ENCODE measurements at regions of chr1 and their contacts with region 1.

Region 1: GRCh38 chr1:178310685-178311105 is 186.1 kb downstream of the CLEC20A start:
- DNase-seq: peak; percentile 85
- ATAC-seq: peak; percentile 77
- H3K4me3 ChIP-seq: no peak overlapping the region
- H3K27ac ChIP-seq: no peak overlapping the region
- H3K4me1 ChIP-seq: peaks cover 12% of the 10 kb centered on the region
- H3K27me3 ChIP-seq: no peaks in the 10 kb centered on the region
- CTCF ChIP-seq: peak; percentile 73

Region 2: DNA sequence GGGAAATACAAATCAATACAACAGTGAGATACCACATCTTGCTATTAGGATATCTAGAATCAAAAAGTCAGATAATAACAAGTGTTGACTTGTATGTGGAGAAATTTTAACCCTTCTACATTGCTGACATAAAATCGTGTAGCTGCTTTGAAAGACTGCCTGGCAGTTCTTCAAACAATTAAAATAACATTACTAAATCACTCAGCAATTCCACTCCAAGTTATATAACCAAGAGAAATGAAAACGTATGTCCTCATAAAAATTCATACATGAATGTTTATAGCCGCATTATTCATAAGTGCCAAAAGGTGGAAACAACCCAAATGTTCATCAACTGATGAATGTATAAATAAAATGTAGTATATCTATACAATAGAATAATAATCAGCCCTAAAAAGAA is 52.2 kb before region 1 on chr1:
- CTCF ChIA-PET with region 1: no interaction called
- POLR2A ChIA-PET with region 1: no interaction called
- intact Hi-C with region 1: no loop called
- DNase-seq: peak; percentile 7
- ATAC-seq: no peak
- H3K4me3 ChIP-seq: no peak overlapping the region
- H3K27ac ChIP-seq: no peak overlapping the region
- H3K4me1 ChIP-seq: no peaks in the 10 kb centered on the region; the same call in 1 of the 2 replicates
- H3K27me3 ChIP-seq: no peaks in the 10 kb centered on the region
- CTCF ChIP-seq: no peak

Region 3: GRCh38 chr1:178282949-178283367 is 27.7 kb before region 1 on chr1:
- CTCF ChIA-PET with region 1: no interaction called
- POLR2A ChIA-PET with region 1: no interaction called
- intact Hi-C with region 1: no loop called
- DNase-seq: peak; percentile 62
- ATAC-seq: peak; percentile 85
- H3K4me3 ChIP-seq: no peak overlapping the region
- H3K27ac ChIP-seq: peak overlapping the region; percentile 51
- H3K4me1 ChIP-seq: peaks cover 23% of the 10 kb centered on the region
- H3K27me3 ChIP-seq: no peaks in the 10 kb centered on the region
- CTCF ChIP-seq: peak; percentile 61

Region 4: DNA sequence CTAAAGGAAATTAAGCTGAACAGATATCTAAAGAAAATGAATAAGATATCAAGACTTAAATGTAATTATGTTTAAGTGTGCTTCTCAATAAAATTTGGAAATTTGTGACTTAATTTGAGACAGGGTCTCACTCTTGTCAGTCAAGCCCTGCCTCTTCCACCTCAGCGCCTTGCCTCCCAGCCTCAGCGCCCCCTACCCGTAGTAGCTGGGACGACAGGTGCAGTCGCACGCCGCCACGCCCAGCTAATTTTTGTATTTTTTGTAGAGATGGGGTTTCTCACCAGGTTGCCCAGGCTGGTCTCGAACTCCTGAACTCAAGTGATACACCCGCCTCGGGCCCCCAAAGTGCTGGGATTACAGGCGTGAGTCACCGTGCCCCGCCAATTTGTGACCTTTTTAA is 69.1 kb after region 1 on chr1:
- CTCF ChIA-PET with region 1: no interaction called
- POLR2A ChIA-PET with region 1: interaction called, 22 read pairs
- intact Hi-C with region 1: no loop called
- DNase-seq: no peak
- ATAC-seq: no peak
- H3K4me3 ChIP-seq: no peak overlapping the region
- H3K27ac ChIP-seq: no peak overlapping the region
- H3K4me1 ChIP-seq: no peaks in the 10 kb centered on the region
- H3K27me3 ChIP-seq: no peaks in the 10 kb centered on the region
- CTCF ChIP-seq: peak; percentile 30; the same call in 1 of the 2 replicates

Region 5: DNA sequence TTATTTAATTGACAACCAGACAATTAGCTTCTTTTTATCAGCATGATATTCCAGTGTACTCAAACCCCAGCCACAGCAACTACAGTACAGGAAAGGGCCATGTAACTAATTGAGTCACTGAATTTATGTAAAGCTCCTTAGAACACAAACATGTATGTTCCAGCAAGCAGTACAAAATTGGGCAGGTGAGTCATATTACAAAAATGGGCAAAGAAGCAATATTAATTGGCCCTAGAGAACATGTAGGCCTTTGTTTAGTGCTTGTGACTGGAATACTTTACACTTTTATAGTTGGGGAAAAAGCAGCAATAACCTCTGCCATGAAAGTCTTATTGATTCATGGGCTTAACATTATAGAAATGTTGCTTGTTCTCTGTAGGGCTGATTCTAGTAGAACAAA is 154.3 kb after region 1 on chr1:
- CTCF ChIA-PET with region 1: no interaction called
- POLR2A ChIA-PET with region 1: no interaction called
- intact Hi-C with region 1: loop called (anchors 5 kb)
- DNase-seq: peak; percentile 36
- ATAC-seq: peak; percentile 79
- H3K4me3 ChIP-seq: no peak overlapping the region
- H3K27ac ChIP-seq: no peak overlapping the region
- H3K4me1 ChIP-seq: peaks cover 4% of the 10 kb centered on the region
- H3K27me3 ChIP-seq: no peaks in the 10 kb centered on the region
- CTCF ChIP-seq: no peak

Region 6: DNA sequence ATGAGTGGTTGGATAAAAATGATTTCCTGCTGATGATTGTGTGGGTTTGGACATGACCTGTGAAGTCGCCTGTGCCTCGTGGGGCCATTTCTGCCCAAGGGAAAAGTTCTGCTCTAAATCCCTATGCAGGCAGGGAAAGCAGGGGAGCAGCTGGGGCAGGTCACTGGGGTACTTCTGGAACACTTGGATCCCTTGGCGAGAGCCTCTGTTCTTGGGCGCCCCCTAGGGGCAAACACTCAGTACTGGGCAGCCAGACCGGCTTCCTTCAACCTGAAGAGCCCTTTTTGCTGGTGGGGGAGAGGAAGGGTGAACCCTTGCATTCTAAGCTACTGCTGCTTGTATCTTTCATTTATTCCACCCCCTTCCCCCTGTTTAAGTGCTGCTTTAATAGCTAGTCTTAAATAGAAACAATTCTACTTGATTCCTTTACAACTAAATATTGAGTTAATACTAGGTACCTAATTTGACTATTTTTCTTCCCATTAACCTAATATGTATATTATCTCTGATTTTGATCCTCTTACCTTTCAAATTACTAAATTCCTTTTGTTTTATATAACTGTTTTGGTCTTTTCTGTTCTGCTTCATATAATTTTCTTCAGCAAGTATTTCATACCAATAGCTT is 191.1 kb after region 1 on chr1:
- CTCF ChIA-PET with region 1: interaction called, 5 read pairs
- POLR2A ChIA-PET with region 1: no interaction called
- intact Hi-C with region 1: loop called (anchors 5 kb)
- DNase-seq: peak; percentile 71
- ATAC-seq: peak; percentile 88
- H3K4me3 ChIP-seq: no peak overlapping the region
- H3K27ac ChIP-seq: no peak overlapping the region
- H3K4me1 ChIP-seq: no peaks in the 10 kb centered on the region
- H3K27me3 ChIP-seq: no peaks in the 10 kb centered on the region
- CTCF ChIP-seq: peak; percentile 80

Region 7: DNA sequence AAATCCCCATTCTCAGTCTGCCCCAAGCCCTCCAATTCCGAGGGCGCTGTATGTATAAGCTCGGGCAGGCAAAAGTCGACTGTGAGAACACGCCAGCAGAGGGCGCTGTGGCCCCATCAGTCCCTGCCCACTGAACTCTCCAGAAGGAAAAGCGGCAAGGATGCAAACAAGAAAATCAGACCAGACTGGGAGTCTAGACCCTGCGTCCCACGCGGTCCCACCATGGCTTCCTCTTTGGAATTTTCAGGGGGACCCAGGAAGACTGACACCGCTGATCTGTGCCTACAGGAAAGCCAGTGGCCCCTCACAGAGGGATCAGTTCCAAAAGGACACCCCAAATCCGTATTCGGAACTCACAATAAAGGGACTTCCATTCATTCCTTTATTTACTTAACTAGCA is 221.7 kb after region 1 on chr1:
- CTCF ChIA-PET with region 1: interaction called, 7 read pairs
- POLR2A ChIA-PET with region 1: no interaction called
- intact Hi-C with region 1: loop called (anchors 5 kb)
- DNase-seq: peak; percentile 85
- ATAC-seq: peak; percentile 42
- H3K4me3 ChIP-seq: peak overlapping the region; percentile 46; the same call in 1 of the 2 replicates
- H3K27ac ChIP-seq: no peak overlapping the region
- H3K4me1 ChIP-seq: peaks cover 45% of the 10 kb centered on the region
- H3K27me3 ChIP-seq: no peaks in the 10 kb centered on the region
- CTCF ChIP-seq: peak; percentile 82